ENCODE measurements at regions of chr6 and their contacts with region 1.

Region 1: DNA sequence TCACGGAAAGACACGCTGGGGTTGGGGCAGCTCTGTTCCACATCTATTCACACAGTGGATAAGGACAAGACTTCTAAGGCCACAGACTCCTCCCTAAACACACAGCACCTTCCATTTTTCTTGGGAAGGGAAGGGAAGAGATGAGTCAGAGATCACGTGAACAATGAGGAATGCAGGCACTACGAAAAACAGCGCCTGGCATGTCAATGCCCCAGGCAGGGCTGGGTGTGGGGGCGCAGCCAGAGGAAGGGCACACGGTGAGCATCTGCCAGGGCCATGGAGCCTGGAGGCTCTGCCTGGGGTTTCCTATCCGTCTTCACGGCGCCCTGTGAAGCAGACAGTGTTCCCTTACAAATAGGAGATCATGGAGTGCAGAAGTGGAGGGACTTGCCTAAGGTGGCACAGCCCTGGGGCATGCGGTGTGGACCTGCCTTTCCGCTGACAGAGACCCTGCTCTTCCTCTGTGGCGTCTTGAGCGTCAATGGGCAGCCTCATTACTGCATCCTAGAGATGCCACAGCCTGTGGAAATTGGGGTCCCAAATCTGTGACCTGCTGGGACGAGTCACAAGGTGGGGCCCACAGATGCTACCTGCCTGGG is 15.4 kb downstream of the UNC93A start:
- DNase-seq: peak; percentile 50
- ATAC-seq: no peak
- H3K4me3 ChIP-seq: no peak overlapping the region
- H3K27ac ChIP-seq: peak overlapping the region; percentile 2
- H3K4me1 ChIP-seq: peaks cover 81% of the 10 kb centered on the region
- H3K27me3 ChIP-seq: no peaks in the 10 kb centered on the region
- CTCF ChIP-seq: no peak
- EP300 ChIP-seq: no peak
- POLR2A ChIP-seq: no peak
- RAD21 ChIP-seq: no peak

Region 2: DNA sequence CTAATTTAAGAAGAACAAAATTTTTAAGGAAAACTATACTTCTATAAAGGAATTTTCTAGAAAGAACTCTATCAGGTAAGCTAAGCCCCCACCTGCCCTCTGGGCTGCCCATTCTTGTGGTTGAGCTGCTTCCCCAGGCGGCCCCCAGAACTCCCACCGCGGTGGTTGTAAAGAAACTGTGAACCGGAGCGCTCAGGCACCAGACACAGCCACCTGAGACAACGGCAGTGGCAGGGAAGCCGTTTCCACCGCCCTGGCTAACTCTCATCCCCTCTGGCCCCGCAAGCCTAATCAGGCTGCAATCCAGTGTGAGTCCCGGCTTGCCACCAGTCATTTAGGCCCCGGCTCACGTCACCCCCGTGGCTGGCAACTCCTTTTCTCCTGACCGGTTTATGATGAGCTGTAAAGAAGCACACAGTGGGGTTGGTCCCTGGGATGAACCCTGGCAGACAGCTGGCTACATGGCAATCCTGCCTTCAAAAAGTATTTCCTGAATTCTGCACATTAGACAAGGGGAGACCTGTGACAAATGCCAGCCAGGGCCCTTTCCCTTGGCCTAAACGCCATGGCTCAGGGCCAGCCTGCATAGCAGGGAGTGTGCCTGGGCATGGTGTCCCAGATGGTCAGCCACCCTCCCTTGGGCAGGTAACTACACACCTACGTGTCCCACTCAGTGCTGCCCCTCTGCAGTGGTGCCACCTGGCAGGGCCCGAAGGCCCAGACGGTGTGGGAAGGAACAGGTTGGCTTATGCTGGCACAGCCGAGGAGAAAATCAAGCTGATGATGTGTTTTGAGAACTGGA is 84.9 kb before region 1 on chr6:
- CTCF ChIA-PET with region 1: no interaction called
- POLR2A ChIA-PET with region 1: interaction called, 51 read pairs
- in situ Hi-C with region 1: no loop called
- intact Hi-C with region 1: loop called (anchors 1 kb)
- DNase-seq: no peak
- ATAC-seq: no peak
- H3K4me3 ChIP-seq: no peak overlapping the region
- H3K27ac ChIP-seq: peak overlapping the region; percentile 82
- H3K4me1 ChIP-seq: peaks cover 95% of the 10 kb centered on the region
- H3K27me3 ChIP-seq: no peaks in the 10 kb centered on the region
- CTCF ChIP-seq: no peak
- EP300 ChIP-seq: no peak
- POLR2A ChIP-seq: no peak
- RAD21 ChIP-seq: no peak

Region 3: DNA sequence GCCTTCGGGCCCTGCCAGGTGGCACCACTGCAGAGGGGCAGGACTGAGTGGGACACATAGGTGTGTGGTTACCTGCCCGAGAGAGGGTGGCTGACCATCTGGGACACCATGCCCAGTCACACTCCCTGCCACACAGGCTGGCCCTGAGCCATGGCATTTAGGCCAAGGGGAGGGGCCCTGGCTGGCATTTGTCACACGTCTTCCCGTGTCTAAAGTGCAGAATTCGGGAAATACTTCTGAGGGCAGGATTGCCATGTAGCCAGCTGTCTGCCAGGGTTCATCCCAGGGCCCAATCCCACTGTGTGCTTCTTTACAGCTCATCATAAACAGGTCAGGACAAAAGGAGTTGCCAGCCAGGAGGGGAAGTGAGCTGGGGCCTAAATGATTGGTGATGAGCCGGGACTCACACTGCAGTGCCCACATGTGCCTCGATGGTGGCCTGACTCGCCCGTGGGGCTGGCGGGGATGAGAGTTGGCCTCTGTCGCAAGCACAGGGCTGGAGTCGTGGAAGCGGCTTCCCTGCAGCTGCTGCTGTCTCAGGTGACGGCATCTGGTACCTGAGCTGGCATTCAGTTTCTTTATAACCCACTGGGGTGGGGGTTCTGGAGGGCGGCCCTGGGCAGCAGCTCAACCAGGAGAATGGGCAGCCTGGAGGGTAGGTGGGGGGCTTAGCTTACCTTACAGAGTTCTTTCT is 21.3 kb before region 1 on chr6:
- CTCF ChIA-PET with region 1: no interaction called
- POLR2A ChIA-PET with region 1: interaction called, 163 read pairs
- in situ Hi-C with region 1: no loop called
- intact Hi-C with region 1: no loop called
- DNase-seq: no peak
- ATAC-seq: no peak
- H3K4me3 ChIP-seq: no peak overlapping the region
- H3K27ac ChIP-seq: no peak overlapping the region
- H3K4me1 ChIP-seq: peaks cover 92% of the 10 kb centered on the region
- H3K27me3 ChIP-seq: no peaks in the 10 kb centered on the region
- CTCF ChIP-seq: no peak
- EP300 ChIP-seq: no peak
- POLR2A ChIP-seq: no peak
- RAD21 ChIP-seq: no peak

Region 4: GRCh38 chr6:167317172-167317571 is 10.7 kb after region 1 on chr6:
- CTCF ChIA-PET with region 1: no interaction called
- POLR2A ChIA-PET with region 1: interaction called, 15 read pairs
- in situ Hi-C with region 1: no loop called
- intact Hi-C with region 1: no loop called
- DNase-seq: no peak
- ATAC-seq: no peak
- H3K4me3 ChIP-seq: no peak overlapping the region
- H3K27ac ChIP-seq: no peak overlapping the region
- H3K4me1 ChIP-seq: peaks cover 75% of the 10 kb centered on the region
- H3K27me3 ChIP-seq: no peaks in the 10 kb centered on the region
- CTCF ChIP-seq: no peak
- EP300 ChIP-seq: no peak
- POLR2A ChIP-seq: no peak
- RAD21 ChIP-seq: no peak

Region 5: DNA sequence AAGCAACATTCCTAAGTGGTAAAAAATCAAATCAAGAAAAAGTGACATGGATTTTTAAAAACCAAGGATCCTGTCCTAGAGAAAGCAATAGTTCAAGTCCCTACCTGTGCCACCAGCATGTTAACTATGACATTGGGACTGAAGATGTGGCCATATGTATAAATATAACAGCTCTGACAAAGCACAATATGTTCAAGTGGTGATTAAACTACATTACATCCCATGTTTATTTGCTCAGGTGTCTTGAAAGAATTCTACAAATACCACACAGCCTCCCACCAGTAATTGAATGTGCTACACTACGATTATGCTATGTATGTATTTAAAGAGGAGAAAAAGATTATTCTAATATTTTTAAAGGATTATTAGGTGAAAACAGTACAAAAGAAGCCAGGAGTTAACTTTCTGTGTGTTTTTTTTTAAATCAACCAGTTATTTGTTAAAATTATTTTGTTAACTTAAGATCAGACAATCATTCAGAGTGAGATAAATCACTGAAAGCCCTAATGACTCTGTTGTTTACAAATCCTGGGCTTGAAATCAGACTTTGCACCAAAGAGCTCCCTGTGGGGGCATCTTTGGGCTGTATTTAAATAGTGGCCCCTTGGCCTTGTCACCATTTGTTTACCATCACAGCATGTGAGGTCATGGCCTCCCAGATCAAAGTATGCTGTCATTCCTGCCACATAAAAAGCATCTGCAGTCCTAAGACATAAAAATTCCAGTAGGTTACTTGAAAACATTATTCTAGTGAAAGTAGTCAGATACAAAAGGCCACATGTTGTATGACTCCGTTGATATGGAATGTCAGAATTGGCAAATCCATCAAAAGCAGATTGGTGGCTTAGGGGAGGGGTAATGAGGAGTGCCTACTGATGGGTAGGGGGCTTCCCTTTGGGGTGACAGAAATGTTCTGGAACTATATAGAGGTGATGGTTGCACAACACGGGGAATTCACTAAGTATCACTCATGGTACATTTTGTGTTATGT is 35.5 kb after region 1 on chr6:
- CTCF ChIA-PET with region 1: no interaction called
- POLR2A ChIA-PET with region 1: interaction called, 177 read pairs
- in situ Hi-C with region 1: no loop called
- intact Hi-C with region 1: loop called (anchors 1 kb)
- DNase-seq: peak; percentile 100
- ATAC-seq: peak; percentile 91
- H3K4me3 ChIP-seq: peak overlapping the region in 1 of 3 experiments; percentile 14; a peak in 1 of 6 replicates
- H3K27ac ChIP-seq: peak overlapping the region; percentile 79
- H3K4me1 ChIP-seq: peaks cover 81% of the 10 kb centered on the region
- H3K27me3 ChIP-seq: no peaks in the 10 kb centered on the region
- CTCF ChIP-seq: 0 out of 2 replicates have a peak, but pooled peaks have one; percentile 20
- EP300 ChIP-seq: peak; percentile 99 to 100
- POLR2A ChIP-seq: 0 out of 4 replicates have a peak, but pooled peaks of 1 of the 2 experiments have one; percentile 24
- RAD21 ChIP-seq: peak; percentile 15; the same call in 1 of the 2 replicates

Region 6: DNA sequence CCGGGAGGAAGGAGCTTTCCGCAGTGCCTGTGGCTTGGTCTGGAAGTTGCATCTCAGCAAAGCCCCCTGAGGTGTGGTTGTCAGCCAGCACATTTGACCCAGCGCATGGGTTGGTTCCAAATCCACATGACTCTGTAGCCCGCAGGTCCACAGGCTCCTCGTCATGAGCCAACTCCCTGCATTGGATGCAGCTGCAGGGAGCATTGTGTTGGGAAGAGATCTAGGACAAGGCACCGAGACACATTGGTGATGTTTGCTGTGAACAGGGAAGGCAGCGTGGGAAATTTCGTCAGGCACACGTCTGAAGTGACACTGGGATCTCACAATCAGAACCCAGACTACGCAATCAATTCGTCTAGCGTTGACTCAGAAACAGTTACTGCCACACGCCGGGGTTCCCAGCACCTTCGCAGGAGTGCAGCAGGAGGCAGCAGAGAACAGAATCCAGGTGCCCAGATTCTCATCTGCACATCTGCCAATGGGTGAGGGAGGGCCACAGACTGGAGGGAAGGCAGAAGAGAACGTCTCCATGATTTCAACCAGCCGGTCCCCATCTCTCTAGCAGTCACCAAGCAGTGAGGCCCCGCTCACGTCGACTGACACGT is 195.4 kb after region 1 on chr6:
- CTCF ChIA-PET with region 1: no interaction called
- POLR2A ChIA-PET with region 1: no interaction called
- in situ Hi-C with region 1: no loop called
- intact Hi-C with region 1: no loop called
- DNase-seq: peak; percentile 77
- ATAC-seq: peak; percentile 74
- H3K4me3 ChIP-seq: no peak overlapping the region
- H3K27ac ChIP-seq: no peak overlapping the region
- H3K4me1 ChIP-seq: peaks cover 89% of the 10 kb centered on the region
- H3K27me3 ChIP-seq: no peaks in the 10 kb centered on the region
- CTCF ChIP-seq: peak; percentile 93
- EP300 ChIP-seq: no peak
- POLR2A ChIP-seq: no peak
- RAD21 ChIP-seq: peak; percentile 98

Region 7: GRCh38 chr6:167778497-167779139 is 472.1 kb after region 1 on chr6:
- CTCF ChIA-PET with region 1: no interaction called
- POLR2A ChIA-PET with region 1: no interaction called
- in situ Hi-C with region 1: no loop called
- intact Hi-C with region 1: no loop called
- DNase-seq: no peak
- ATAC-seq: peak; percentile 43
- H3K4me3 ChIP-seq: peak overlapping the region in 1 of 3 experiments; percentile 32; a peak in 1 of 6 replicates
- H3K27ac ChIP-seq: no peak overlapping the region
- H3K4me1 ChIP-seq: peaks cover 48% of the 10 kb centered on the region
- H3K27me3 ChIP-seq: no peaks in the 10 kb centered on the region; a peak in 1 of 5 replicates
- CTCF ChIP-seq: no peak
- EP300 ChIP-seq: no peak
- POLR2A ChIP-seq: no peak
- RAD21 ChIP-seq: no peak

Region 8: GRCh38 chr6:167962711-167963110 is 656.2 kb after region 1 on chr6:
- CTCF ChIA-PET with region 1: no interaction called
- POLR2A ChIA-PET with region 1: no interaction called
- in situ Hi-C with region 1: no loop called
- intact Hi-C with region 1: loop called (anchors 5 kb)
- DNase-seq: no peak
- ATAC-seq: no peak
- H3K4me3 ChIP-seq: no peak overlapping the region
- H3K27ac ChIP-seq: peak overlapping the region; percentile 78
- H3K4me1 ChIP-seq: peaks cover 77% of the 10 kb centered on the region
- H3K27me3 ChIP-seq: no peaks in the 10 kb centered on the region
- CTCF ChIP-seq: no peak
- EP300 ChIP-seq: no peak
- POLR2A ChIP-seq: no peak
- RAD21 ChIP-seq: no peak